CD8-positive, alpha-beta memory T cell (primary cell): ENCODE measurements at regions of chr17 and their contacts with region 1.

Region 1: GRCh38 chr17:43211480-43212402 is at the start of gene TMEM106A:
- DNase-seq: peak; percentile 64 to 84 (median 69)
- H3K4me3 ChIP-seq: peak within 1 kb of the TSS; percentile 79
- H3K4me3 Mint-ChIP-seq: peak within 1 kb of the TSS; percentile 83 to 100 (median 96)
- H3K27ac ChIP-seq: peak within 1 kb of the TSS; percentile 76
- H3K27ac Mint-ChIP-seq: peak within 1 kb of the TSS; percentile 59 to 98 (median 96)
- H3K4me1 ChIP-seq: peaks cover 23% of the 10 kb centered on the region
- H3K4me1 Mint-ChIP-seq: peaks cover 34 to 54% (median 44%) of the 10 kb centered on the region in 3 donors
- H3K27me3 ChIP-seq: no peaks in the 10 kb centered on the region
- H3K27me3 Mint-ChIP-seq: no peaks in the 10 kb centered on the region
- total RNA-seq, gene TMEM106A: 8.8 to 10.2 TPM

Region 2: DNA sequence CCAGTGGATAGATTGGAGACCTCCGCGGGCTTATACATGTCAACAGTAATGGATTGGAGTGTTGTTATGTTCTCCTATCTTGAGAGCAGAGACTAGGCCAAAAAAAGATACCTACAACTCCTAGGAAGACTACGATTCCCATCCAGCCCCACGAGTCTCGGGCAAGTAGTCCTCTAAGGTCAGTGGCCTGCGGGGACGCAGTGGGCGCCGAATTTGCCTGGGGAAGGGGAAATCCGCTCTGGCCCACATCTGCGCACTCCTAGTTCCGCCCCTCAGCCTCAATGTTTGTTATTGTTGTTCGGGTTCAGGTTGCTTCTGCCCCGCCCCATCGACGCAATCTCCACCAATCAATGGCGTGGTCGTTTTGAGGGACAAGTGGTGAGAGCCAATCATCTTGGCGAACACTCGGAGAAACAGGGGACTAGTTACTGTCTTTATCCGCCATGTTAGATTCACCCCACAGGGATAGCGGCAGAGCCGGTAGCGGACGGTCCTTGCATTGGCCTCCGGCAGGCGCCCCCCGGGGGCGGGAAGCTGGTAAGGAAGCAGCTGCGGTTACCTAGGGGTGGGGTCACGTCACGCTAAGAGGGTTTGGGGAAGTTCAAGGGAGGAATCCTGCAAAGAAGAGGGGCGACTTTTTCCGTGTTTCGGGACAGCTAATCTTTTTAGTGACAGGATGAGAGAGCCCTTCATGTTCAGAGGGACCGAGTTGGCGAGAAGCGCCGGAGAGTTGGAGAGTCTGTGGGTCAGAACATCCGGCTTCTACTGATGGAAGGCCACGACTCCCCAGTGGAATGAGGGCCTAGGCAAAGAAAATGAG is 40.8 kb before region 1 on chr17 and contains the start of gene NBR1:
- CTCF ChIA-PET with region 1: interaction called, 3 read pairs
- POLR2A ChIA-PET with region 1: interaction called, 11 read pairs
- DNase-seq: peak; percentile 87 to 98 (median 96)
- H3K4me3 ChIP-seq: peak within 1 kb of the TSS; percentile 90
- H3K4me3 Mint-ChIP-seq: no peak within 1 kb of the TSS
- H3K27ac ChIP-seq: peak within 1 kb of the TSS; percentile 99
- H3K27ac Mint-ChIP-seq: no peak within 1 kb of the TSS
- H3K4me1 ChIP-seq: peaks cover 43% of the 10 kb centered on the region
- H3K4me1 Mint-ChIP-seq: peaks cover 30 to 37% (median 34%) of the 10 kb centered on the region in 3 donors
- H3K27me3 ChIP-seq: no peaks in the 10 kb centered on the region
- H3K27me3 Mint-ChIP-seq: no peaks in the 10 kb centered on the region
- total RNA-seq, gene NBR1: 42.6 to 44.3 TPM

Region 3: GRCh38 chr17:43224146-43224695 is 12.5 kb after region 1 on chr17:
- CTCF ChIA-PET with region 1: no interaction called
- POLR2A ChIA-PET with region 1: no interaction called
- DNase-seq: no peak
- H3K4me3 ChIP-seq: no peak overlapping the region
- H3K4me3 Mint-ChIP-seq: no peak overlapping the region
- H3K27ac ChIP-seq: no peak overlapping the region
- H3K27ac Mint-ChIP-seq: peak overlapping the region in 2 of 8 donors; percentile 72 to 77
- H3K4me1 ChIP-seq: no peaks in the 10 kb centered on the region
- H3K4me1 Mint-ChIP-seq: peaks cover 4 to 5% (median 5%) of the 10 kb centered on the region in 3 donors
- H3K27me3 ChIP-seq: no peaks in the 10 kb centered on the region
- H3K27me3 Mint-ChIP-seq: no peaks in the 10 kb centered on the region

Region 4: DNA sequence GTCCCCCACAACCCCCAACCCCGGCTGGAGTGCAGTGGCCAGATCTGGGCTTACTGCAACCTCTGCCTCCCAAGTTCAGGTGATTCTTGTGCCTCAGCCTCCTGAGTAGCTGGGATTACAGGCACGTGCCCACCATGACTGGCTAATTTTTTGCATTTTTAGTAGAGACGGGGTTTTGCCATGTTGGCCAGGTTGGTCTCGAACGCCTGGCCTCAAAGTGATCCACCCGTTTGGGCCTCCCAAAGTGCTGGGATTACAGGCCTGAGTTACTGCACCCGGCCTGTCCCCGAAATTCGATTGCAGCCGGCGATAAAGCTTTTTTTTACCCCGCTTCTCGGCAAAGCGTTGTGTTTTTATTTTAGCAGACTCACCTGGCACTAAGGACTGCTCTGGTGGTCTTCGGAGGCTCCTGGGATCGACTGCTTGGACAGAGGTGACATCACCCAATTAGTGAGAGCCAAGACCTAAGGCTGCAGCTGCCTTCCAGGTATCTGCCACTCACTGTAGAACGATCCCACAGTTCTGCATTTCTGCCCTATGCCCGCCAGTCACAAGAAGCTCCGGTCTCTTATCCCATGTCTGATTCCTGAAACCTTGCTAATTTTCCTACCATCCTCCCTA is 104.9 kb after region 1 on chr17:
- CTCF ChIA-PET with region 1: interaction called, 6 read pairs
- POLR2A ChIA-PET with region 1: interaction called, 27 read pairs
- DNase-seq: peak; percentile 13 to 62 (median 28)
- H3K4me3 ChIP-seq: no peak overlapping the region
- H3K4me3 Mint-ChIP-seq: peak overlapping the region in 5 of 7 donors; percentile 16 to 74 (median 38)
- H3K27ac ChIP-seq: no peak overlapping the region
- H3K27ac Mint-ChIP-seq: peak overlapping the region in 6 of 8 donors; percentile 10 to 72 (median 37)
- H3K4me1 ChIP-seq: no peaks in the 10 kb centered on the region
- H3K4me1 Mint-ChIP-seq: peaks cover 2 to 15% (median 12%) of the 10 kb centered on the region in 3 donors
- H3K27me3 ChIP-seq: no peaks in the 10 kb centered on the region
- H3K27me3 Mint-ChIP-seq: no peaks in the 10 kb centered on the region

Region 5: GRCh38 chr17:43330876-43331639 is 119.3 kb after region 1 on chr17:
- CTCF ChIA-PET with region 1: interaction called, 12 read pairs
- POLR2A ChIA-PET with region 1: no interaction called
- DNase-seq: no peak
- H3K4me3 ChIP-seq: no peak overlapping the region
- H3K4me3 Mint-ChIP-seq: no peak overlapping the region
- H3K27ac ChIP-seq: no peak overlapping the region
- H3K27ac Mint-ChIP-seq: no peak overlapping the region
- H3K4me1 ChIP-seq: peaks cover 6% of the 10 kb centered on the region
- H3K4me1 Mint-ChIP-seq: peaks cover 6 to 9% (median 7%) of the 10 kb centered on the region in 3 donors
- H3K27me3 ChIP-seq: no peaks in the 10 kb centered on the region
- H3K27me3 Mint-ChIP-seq: peaks cover 15 to 36% of the 10 kb centered on the region in 2 donors